ENCODE measurements at regions of chr15 and their contacts with region 1.

Region 1: DNA sequence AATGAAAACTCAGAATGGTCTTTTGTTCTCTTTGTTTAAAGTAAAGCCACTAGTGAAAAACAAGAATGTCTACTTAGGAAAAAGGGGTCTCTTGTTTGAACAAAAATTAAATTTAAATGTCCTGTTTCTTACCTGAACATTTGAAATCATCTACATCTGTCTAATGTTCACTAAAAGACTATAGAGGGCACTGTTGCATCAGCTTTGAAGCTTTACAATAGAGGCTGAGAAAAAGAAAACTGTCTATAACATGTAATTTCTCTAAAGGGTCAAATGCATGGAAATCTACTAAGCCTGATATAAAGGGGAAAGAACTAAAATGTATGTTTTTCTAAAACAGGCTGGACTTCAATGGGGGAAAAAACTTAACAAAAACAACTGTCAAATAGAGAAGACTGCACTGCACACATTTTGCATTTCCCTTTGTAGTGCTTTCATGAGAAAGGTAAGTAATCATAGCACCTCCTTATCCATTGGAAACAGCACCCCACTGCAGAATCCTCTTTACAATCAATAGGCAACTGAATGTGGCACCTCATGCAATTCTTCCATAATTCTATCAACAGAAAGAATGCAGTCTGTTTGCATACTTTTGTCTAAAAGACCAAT is 26.3 kb downstream of the DPH6 start:
- DNase-seq: no peak
- ATAC-seq: no peak

Region 2: DNA sequence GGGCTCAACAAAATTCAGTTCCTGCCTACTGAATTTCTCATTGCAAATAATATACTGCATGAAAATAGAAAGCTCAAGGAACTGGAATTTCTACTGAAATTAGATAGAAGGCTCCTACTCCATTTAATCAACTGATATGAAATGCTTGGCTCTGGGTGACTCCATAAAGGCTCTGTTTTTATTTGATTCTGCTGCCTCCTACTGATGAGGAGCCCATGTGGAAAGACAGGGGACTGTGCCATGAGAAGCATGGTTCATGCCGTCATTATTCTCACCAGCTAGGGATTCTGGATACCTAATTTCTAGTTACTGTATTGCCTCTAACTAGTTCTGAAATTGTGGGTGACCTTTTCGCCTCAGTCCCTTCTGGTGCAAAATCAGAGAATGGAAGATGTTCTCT is 392.6 kb after region 1 on chr15:
- intact Hi-C with region 1: loop called (anchors 2 kb)
- DNase-seq: no peak
- ATAC-seq: no peak